GM12878 (cell line): ENCODE measurements at regions of chr7 and their contacts with region 1.

Region 1: DNA sequence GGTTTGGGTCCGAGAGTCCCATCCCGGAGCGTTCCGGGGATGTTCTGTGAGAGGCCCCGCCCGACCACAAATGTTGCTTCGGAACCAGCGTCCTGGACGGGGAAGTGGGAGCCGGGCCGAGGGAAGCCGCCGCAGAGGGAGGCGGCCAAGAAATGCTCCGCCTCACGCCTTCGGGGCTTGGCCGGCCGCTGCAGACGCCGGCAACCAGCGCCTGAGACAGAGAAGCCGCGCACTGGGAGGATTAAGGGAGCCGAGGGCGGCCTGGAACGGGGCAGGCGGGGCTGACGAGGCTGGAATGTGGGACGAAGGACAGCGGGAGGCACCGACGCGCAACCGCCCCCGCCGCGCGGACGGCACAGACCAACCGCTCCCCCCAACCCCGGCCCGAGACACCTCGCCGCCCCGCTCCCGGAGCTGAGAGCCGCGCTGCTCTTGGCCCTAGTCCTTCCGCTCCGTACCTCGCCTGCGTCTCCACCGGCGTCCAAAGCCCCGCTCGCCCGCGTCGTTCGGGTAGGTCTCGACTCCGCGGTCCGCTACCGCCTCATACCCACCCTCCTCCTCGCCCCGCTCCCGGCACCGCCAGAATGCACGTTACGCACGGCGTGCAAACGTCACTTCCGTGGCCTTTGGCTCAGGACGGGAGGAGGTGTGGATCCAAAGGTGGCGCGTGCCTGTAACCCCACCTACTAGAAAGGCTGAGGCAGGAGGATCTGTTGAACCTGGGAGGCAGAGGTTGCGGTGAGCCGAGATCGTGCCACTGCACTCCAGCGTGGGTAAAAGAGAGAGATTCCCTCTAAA is 36.7 kb upstream of the KCTD7 start:
- DNase-seq: peak; percentile 64
- ATAC-seq: peak; percentile 97
- H3K4me3 ChIP-seq: peak overlapping the region; percentile 86
- H3K27ac ChIP-seq: peak overlapping the region; percentile 64
- H3K4me1 ChIP-seq: peaks cover 4% of the 10 kb centered on the region; the same call in 1 of the 2 replicates
- H3K27me3 ChIP-seq: no peaks in the 10 kb centered on the region
- CTCF ChIP-seq: no peak
- EP300 ChIP-seq: no peak
- POLR2A ChIP-seq: peak; percentile 96
- RAD21 ChIP-seq: no peak

Region 2: DNA sequence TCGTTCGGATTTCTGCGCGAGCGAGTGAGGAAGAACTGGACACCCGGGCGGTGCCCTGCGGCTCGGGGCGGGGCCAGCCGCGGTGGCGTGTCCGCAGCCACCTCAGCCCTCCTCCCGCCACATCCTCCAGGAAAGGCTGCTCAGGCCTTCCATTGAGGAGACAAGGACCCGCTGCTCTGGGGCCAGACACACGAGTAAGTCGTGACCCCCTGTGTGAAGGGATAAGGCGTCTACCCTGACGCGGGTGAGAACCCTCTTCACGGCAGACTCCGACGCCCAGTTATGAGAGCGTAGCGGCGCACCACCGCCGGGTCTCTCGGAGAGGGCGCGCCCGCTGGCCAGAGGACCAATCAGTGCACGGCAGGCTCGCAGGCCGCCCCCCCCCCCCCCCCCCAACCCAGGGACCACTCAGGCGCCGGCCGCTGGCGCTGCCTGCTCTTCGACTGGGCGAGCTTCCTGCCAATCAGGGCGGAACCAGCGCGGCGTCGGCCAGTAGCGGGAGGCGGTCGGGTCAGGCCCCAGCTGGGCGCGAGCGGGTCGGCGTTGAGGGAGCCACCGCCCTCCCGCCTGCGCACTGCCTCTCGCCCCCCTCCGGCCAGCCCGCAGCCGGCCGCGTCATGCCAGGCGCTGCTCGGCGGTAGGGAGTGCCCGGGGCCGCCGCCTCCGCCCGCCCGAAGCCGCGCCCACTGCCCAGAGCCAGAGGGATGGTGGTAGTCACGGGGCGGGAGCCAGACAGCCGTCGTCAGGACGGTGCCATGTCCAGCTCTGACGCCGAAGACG is 36.6 kb after region 1 on chr7 and contains the start of gene KCTD7:
- CTCF ChIA-PET with region 1: interaction called, 4 read pairs
- POLR2A ChIA-PET with region 1: interaction called, 4 read pairs
- RAD21 ChIA-PET with region 1: no interaction called
- SMC1A ChIA-PET with region 1: interaction called, 6 read pairs
- in situ Hi-C with region 1: no loop called
- intact Hi-C with region 1: loop called (anchors 5 kb)
- DNase-seq: peak; percentile 80
- ATAC-seq: peak; percentile 94
- H3K4me3 ChIP-seq: peak within 1 kb of the TSS; percentile 88
- H3K27ac ChIP-seq: peak within 1 kb of the TSS; percentile 74
- H3K4me1 ChIP-seq: peaks cover 43% of the 10 kb centered on the region
- H3K27me3 ChIP-seq: no peaks in the 10 kb centered on the region
- CTCF ChIP-seq: no peak
- EP300 ChIP-seq: no peak
- POLR2A ChIP-seq: peak; percentile 99
- RAD21 ChIP-seq: no peak
- polyA plus RNA-seq, gene KCTD7: 1.6 TPM